CD8-positive, alpha-beta T cell (primary cell): ENCODE measurements at regions of chr2 and their contacts with region 1.

Region 1: DNA sequence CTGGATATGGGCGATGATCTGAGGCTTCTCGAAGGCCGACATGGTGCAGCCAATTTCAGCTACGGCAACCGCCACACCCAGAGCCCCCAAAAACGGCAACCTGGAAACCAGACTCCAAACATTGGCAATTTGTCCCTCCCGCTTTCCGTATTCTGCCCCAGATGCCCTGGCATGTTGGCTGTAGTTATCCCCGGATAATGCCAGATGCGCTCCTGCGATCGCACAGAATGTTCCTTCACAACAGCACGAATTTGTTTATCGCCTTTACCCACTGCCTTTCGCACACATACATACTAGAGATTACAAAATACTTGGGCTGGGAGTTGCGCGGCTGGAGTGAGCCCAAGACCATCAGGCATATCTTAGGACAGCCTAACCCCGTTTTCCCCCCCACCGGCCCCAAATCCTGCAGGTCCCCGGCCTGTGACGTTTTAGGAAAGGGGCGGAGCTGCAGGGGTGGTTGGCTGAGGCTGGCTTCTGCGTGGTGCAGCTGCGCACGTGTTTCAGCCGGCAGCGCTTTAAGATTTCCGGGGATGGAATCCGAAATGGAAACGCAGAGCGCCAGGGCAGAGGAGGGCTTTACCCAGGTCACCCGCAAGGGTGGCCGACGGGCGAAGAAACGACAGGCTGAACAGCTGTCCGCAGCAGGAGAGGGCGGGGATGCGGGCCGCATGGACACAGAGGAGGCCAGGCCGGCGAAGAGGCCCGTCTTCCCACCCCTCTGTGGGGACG is at the start of gene PNO1:
- DNase-seq: peak; percentile 95 to 98 (median 97)
- ATAC-seq: peak; percentile 95
- H3K4me3 ChIP-seq: peak within 1 kb of the TSS; percentile 66 to 73
- H3K4me3 Mint-ChIP-seq: peak within 1 kb of the TSS; percentile 97
- H3K27ac ChIP-seq: peak within 1 kb of the TSS; percentile 90 to 94
- H3K27ac Mint-ChIP-seq: peak within 1 kb of the TSS; percentile 100
- H3K4me1 ChIP-seq: peaks cover 34% of the 10 kb centered on the region
- H3K4me1 Mint-ChIP-seq: peaks cover 52% of the 10 kb centered on the region
- H3K27me3 ChIP-seq: no peaks in the 10 kb centered on the region
- H3K27me3 Mint-ChIP-seq: no peaks in the 10 kb centered on the region
- CTCF ChIP-seq: no peak
- total RNA-seq, gene PNO1: 35.3 to 36.0 TPM

Region 2: GRCh38 chr2:68062680-68063387 is 94.7 kb before region 1 on chr2 and contains the start of gene C1D:
- CTCF ChIA-PET with region 1: no interaction called
- POLR2A ChIA-PET with region 1: interaction called, 4 read pairs
- intact Hi-C with region 1: loop called (anchors 1 kb)
- DNase-seq: peak; percentile 88 to 96 (median 93)
- ATAC-seq: peak; percentile 89
- H3K4me3 ChIP-seq: peak within 1 kb of the TSS; percentile 66 to 91
- H3K4me3 Mint-ChIP-seq: peak within 1 kb of the TSS; percentile 96
- H3K27ac ChIP-seq: peak within 1 kb of the TSS; percentile 95 to 96
- H3K27ac Mint-ChIP-seq: peak within 1 kb of the TSS; percentile 98
- H3K4me1 ChIP-seq: peaks cover 30% of the 10 kb centered on the region
- H3K4me1 Mint-ChIP-seq: peaks cover 48% of the 10 kb centered on the region
- H3K27me3 ChIP-seq: no peaks in the 10 kb centered on the region
- H3K27me3 Mint-ChIP-seq: peaks cover 4% of the 10 kb centered on the region
- CTCF ChIP-seq: no peak
- total RNA-seq, gene C1D: 30.1 to 32.7 TPM

Region 3: DNA sequence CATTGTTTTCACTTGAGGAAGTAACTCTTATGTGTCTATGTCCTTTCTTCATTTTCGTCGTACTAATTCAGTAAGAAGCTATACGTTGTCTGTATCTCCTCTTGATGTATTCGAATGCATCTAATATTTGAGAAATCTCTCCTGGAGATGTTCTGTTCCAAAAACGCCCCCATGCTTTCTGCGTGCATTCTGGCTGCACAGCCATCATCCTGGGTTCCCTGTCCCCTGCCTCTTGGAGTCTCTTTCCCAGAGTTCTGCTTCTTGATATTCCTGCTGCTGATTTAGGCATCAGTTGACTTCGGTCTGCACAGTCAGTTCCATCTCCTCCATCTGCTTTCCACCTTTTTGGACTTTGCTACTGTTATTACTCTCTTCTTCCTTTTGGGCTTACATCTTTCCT is 13.6 kb after region 1 on chr2:
- CTCF ChIA-PET with region 1: interaction called, 4 read pairs
- POLR2A ChIA-PET with region 1: interaction called, 7 read pairs
- intact Hi-C with region 1: loop called in 1 of 2 experiments (anchors 2 kb)
- DNase-seq: no peak
- ATAC-seq: no peak
- H3K4me3 ChIP-seq: no peak overlapping the region
- H3K4me3 Mint-ChIP-seq: no peak overlapping the region
- H3K27ac ChIP-seq: no peak overlapping the region
- H3K27ac Mint-ChIP-seq: no peak overlapping the region
- H3K4me1 ChIP-seq: no peaks in the 10 kb centered on the region
- H3K4me1 Mint-ChIP-seq: peaks cover 27% of the 10 kb centered on the region
- H3K27me3 ChIP-seq: no peaks in the 10 kb centered on the region
- H3K27me3 Mint-ChIP-seq: no peaks in the 10 kb centered on the region
- CTCF ChIP-seq: no peak

Region 4: DNA sequence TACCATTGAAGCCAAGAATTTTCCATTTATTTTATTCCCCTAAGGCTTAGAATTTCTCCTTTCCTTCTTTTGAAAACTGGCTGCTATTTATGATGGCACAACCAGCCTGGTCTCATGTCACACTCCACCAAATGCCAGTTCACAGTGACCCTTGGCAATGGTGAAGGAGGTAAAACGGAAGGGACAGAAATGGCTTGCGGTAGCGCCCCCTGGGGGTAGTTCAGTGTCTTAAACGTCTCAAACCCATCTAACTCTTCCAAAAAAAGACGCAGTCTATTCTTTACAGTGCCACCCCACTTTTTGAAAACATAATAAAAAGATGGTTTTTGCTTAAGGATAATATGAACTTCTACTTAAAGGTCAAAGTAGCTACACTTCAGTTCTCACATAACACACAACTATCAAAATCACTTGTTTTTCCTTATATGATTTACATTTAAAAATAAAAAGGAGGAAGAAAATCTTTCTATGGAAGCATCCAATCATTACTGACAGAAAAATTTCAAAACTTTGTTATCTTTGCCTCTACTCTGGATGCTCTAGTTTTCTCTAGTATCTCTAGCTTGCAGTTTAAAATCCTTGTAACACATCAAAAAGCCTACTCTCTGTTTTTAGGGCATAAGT is 28.1 kb after region 1 on chr2:
- CTCF ChIA-PET with region 1: interaction called, 3 read pairs
- POLR2A ChIA-PET with region 1: interaction called, 6 read pairs
- intact Hi-C with region 1: loop called (anchors 2 to 5 kb)
- DNase-seq: peak; percentile 11 to 80 (median 57)
- ATAC-seq: peak; percentile 60
- H3K4me3 ChIP-seq: no peak overlapping the region
- H3K4me3 Mint-ChIP-seq: no peak overlapping the region
- H3K27ac ChIP-seq: no peak overlapping the region
- H3K27ac Mint-ChIP-seq: no peak overlapping the region
- H3K4me1 ChIP-seq: peaks cover 7% of the 10 kb centered on the region
- H3K4me1 Mint-ChIP-seq: peaks cover 34% of the 10 kb centered on the region
- H3K27me3 ChIP-seq: no peaks in the 10 kb centered on the region
- H3K27me3 Mint-ChIP-seq: no peaks in the 10 kb centered on the region
- CTCF ChIP-seq: peak; percentile 81

Region 5: GRCh38 chr2:68925295-68925896 is 767.8 kb after region 1 on chr2:
- CTCF ChIA-PET with region 1: no interaction called
- POLR2A ChIA-PET with region 1: no interaction called
- intact Hi-C with region 1: no loop called
- DNase-seq: peak; percentile 18 to 80 (median 56)
- ATAC-seq: peak; percentile 87
- H3K4me3 ChIP-seq: no peak overlapping the region
- H3K4me3 Mint-ChIP-seq: no peak overlapping the region
- H3K27ac ChIP-seq: no peak overlapping the region
- H3K27ac Mint-ChIP-seq: no peak overlapping the region
- H3K4me1 ChIP-seq: no peaks in the 10 kb centered on the region
- H3K4me1 Mint-ChIP-seq: no peaks in the 10 kb centered on the region
- H3K27me3 ChIP-seq: no peaks in the 10 kb centered on the region
- H3K27me3 Mint-ChIP-seq: peaks cover 2% of the 10 kb centered on the region
- CTCF ChIP-seq: peak; percentile 98

Region 6: GRCh38 chr2:69386789-69387734 is 1229.5 kb after region 1 on chr2 and contains the start of gene GFPT1:
- CTCF ChIA-PET with region 1: no interaction called
- POLR2A ChIA-PET with region 1: no interaction called
- intact Hi-C with region 1: loop called in 1 of 2 experiments (anchors 2 kb)
- DNase-seq: peak; percentile 84 to 97 (median 93)
- ATAC-seq: peak; percentile 98
- H3K4me3 ChIP-seq: peak within 1 kb of the TSS; percentile 64 to 68
- H3K4me3 Mint-ChIP-seq: peak within 1 kb of the TSS; percentile 88
- H3K27ac ChIP-seq: peak within 1 kb of the TSS; percentile 65 to 70
- H3K27ac Mint-ChIP-seq: peak within 1 kb of the TSS; percentile 84
- H3K4me1 ChIP-seq: peaks cover 17% of the 10 kb centered on the region
- H3K4me1 Mint-ChIP-seq: peaks cover 45% of the 10 kb centered on the region
- H3K27me3 ChIP-seq: no peaks in the 10 kb centered on the region
- H3K27me3 Mint-ChIP-seq: no peaks in the 10 kb centered on the region
- CTCF ChIP-seq: no peak
- total RNA-seq, gene GFPT1: 26.5 to 30.9 TPM